ENCODE measurements at regions of chr14 and their contacts with region 1.

Region 1: DNA sequence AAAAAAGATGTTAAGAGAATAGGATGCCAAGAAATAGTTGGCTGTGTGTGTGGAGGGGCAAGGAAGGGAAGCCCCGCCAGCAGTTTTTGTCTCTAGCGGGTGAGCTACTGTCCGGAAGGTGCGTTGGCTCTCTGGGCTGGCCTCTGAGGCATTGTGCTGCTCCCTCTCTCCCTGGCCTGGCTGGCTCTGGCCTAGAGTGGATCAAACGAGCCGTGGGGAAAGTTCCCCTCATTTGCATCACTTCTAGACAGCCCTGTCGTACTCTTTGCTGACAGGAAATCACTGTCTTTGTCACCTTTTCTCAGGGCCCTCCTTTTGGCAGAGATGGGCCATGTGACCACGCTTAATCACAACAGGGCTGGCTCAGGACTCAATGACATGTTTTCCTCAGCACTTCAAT is 236.1 kb upstream of the NPAS3 start:
- DNase-seq: peak; percentile 24
- H3K4me3 ChIP-seq: no peak overlapping the region
- H3K27ac ChIP-seq: peak overlapping the region; percentile 2
- H3K4me1 ChIP-seq: peaks cover 7% of the 10 kb centered on the region
- H3K27me3 ChIP-seq: peaks cover 2 to 3% of the 10 kb centered on the region in 2 experiments
- CTCF ChIP-seq: no peak
- POLR2A ChIP-seq: no peak

Region 2: DNA sequence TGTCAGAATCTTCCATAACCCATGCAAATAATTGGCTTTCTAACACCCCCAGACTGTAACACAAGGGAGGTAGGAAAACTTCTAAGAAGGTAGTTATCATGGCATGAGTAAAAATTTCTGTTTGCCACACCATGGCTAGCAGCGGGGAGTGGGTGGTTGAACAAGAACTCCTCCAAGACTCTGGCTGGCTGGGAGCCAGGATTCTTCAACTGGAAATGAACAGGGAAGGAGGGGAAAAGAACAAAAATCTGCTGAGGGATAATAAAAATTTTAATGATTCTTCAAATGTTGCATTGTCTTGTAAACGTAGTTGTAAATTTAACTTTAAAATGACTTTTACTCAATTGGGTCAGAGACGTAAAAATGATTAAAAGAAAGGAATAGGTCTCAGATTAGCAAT is 294.5 kb before region 1 on chr14:
- CTCF ChIA-PET with region 1: no interaction called
- POLR2A ChIA-PET with region 1: no interaction called
- dilution Hi-C with region 1: no loop called
- intact Hi-C with region 1: no loop called
- DNase-seq: no peak
- H3K4me3 ChIP-seq: no peak overlapping the region
- H3K27ac ChIP-seq: no peak overlapping the region
- H3K4me1 ChIP-seq: no peaks in the 10 kb centered on the region
- H3K27me3 ChIP-seq: no peaks in the 10 kb centered on the region
- CTCF ChIP-seq: no peak
- POLR2A ChIP-seq: no peak

Region 3: GRCh38 chr14:32608857-32609256 is 93.7 kb before region 1 on chr14:
- CTCF ChIA-PET with region 1: no interaction called
- POLR2A ChIA-PET with region 1: no interaction called
- dilution Hi-C with region 1: no loop called
- intact Hi-C with region 1: loop called (anchors 5 kb)
- DNase-seq: peak; percentile 60
- H3K4me3 ChIP-seq: no peak overlapping the region
- H3K27ac ChIP-seq: no peak overlapping the region
- H3K4me1 ChIP-seq: peaks cover 5% of the 10 kb centered on the region
- H3K27me3 ChIP-seq: no peaks in the 10 kb centered on the region
- CTCF ChIP-seq: no peak
- POLR2A ChIP-seq: no peak

Region 4: GRCh38 chr14:32934073-32934890 is 231.7 kb after region 1 on chr14:
- CTCF ChIA-PET with region 1: no interaction called
- POLR2A ChIA-PET with region 1: no interaction called
- dilution Hi-C with region 1: no loop called
- intact Hi-C with region 1: loop called (anchors 5 kb)
- DNase-seq: no peak
- H3K4me3 ChIP-seq: peak overlapping the region in 2 of 3 experiments; percentile 11 to 21
- H3K27ac ChIP-seq: no peak overlapping the region
- H3K4me1 ChIP-seq: peaks cover 19% of the 10 kb centered on the region
- H3K27me3 ChIP-seq: peaks cover 58 to 80% of the 10 kb centered on the region in 2 experiments
- CTCF ChIP-seq: no peak
- POLR2A ChIP-seq: no peak

Measured in endothelial cell of umbilical vein (primary cell).